ENCODE measurements at regions of chr7 and their contacts with region 1.

Region 1: DNA sequence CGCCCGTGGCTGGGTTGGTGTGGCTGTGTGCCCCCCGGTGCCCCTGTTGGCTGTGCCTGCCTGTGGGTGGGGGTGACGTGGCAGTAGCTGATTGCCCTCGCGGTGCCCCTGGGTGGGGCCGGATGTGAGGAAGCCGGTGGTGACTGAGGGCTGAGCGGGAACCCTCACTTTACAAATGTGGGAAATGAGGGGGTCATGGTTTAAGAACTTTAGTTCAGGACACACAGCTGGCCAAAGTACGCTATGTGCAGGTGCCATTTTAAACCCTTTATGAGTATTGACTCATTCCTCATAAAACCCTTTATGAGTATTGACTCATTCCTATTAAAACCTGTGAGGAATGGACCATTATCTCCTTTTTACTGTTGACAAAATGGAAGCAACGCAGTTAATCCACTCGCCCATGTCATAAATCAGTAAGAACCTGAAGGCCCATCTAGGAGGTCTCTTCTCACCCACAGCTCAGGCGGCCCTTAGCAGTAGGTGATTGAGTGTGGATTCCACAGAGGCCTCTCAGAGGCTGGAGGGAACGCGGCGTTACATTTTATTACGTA is 290.1 kb upstream of the COBL start:
- DNase-seq: no peak
- ATAC-seq: no peak
- H3K4me3 ChIP-seq: no peak overlapping the region
- H3K27ac ChIP-seq: no peak overlapping the region
- H3K4me1 ChIP-seq: no peaks in the 10 kb centered on the region
- H3K27me3 ChIP-seq: no peaks in the 10 kb centered on the region
- CTCF ChIP-seq: no peak
- POLR2A ChIP-seq: no peak

Region 2: DNA sequence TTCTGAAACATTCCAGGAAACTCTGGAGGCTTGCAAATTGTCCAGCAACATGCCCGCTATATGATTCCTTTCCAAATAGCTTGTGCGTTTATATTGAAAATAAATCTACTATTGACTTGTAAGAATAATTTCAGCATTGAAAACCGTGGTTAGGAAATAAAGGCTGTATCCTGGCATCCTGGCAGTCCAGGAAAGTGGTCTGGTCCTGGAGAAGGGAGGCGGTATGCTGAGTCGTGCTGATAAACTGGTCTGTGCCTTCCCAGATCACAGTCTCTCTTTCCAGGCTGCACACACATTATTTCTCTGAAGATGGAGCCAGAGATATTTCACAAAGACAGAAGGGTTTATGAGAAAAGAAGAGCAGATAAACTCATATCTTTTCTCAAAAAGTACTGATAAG is 60.1 kb after region 1 on chr7:
- intact Hi-C with region 1: loop called in 1 of 10 experiments (anchors 10 kb)
- DNase-seq: no peak
- ATAC-seq: no peak
- H3K4me3 ChIP-seq: no peak overlapping the region
- H3K27ac ChIP-seq: no peak overlapping the region
- H3K4me1 ChIP-seq: no peaks in the 10 kb centered on the region
- H3K27me3 ChIP-seq: no peaks in the 10 kb centered on the region
- CTCF ChIP-seq: no peak
- POLR2A ChIP-seq: no peak

Region 3: DNA sequence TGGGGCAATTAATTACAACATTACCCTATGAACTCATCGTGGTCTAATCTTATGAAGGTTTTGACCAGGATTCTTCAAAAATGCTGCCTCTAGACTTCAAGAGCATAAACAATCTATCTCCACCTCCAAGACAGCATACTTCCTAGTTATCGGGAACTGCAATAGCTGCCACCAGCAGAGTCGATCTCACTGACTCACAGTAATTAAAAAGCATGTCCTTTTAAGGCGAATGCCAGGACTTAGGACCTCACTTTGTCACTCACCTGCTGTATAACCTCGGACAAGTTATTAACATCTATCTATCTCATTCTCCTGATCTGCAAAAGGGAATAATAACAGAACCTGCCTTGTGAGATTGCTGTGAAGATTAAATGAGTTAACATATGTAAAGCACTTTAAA is 376.0 kb after region 1 on chr7:
- intact Hi-C with region 1: no loop called
- DNase-seq: no peak
- ATAC-seq: no peak
- H3K4me3 ChIP-seq: no peak overlapping the region
- H3K27ac ChIP-seq: no peak overlapping the region
- H3K4me1 ChIP-seq: no peaks in the 10 kb centered on the region
- H3K27me3 ChIP-seq: no peaks in the 10 kb centered on the region
- CTCF ChIP-seq: no peak
- POLR2A ChIP-seq: no peak